Gastrocnemius medialis (tissue), 4 donors: ENCODE measurements at regions of chr22 and their contacts with region 1.

Region 1: DNA sequence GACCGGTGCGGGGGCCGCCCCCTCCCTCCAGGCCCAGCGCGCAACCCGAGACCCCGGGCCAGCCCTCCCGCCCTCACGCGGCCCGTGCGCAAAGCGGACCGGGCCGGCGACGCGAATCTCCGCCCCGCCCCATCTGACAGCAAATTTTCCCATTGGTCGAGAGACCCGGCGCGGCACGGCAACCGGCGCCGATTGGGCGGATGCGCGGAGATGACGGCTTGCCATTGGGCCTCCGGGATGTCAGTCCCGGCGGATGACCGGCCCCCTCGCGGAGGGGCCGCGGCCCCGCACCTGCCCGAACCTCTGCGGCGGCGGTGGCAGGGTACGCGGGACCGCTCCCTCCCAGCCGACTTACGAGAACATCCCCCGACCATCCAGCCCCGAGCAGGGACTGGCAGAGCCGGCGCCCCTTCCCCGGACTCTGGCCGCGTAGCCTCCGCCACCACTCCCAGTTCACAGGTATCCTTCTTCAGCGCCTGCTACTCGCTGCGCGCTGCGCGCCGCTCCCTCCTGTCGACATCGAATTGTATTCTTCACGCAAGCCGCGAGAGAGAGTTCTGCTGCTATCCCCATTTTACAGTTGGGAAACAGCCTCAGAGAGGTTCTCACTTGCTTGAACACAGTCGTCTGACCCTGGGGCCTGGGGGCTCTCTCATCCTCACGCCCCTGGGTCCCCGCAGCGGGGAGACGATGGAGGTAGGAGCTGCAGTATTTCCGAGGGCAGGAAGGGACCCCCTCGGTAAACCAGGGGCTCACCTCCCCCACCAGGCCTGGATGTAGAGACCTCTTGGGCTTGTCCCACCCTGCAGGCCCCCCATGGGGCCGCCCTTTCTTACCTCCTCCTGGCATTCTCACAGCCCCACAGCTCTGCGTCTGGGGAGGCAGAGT is at the start of gene ARVCF:
- DNase-seq: peak; percentile 92
- ATAC-seq: peak; percentile 70 to 76
- H3K4me3 ChIP-seq: peak within 1 kb of the TSS; percentile 69 to 88 (median 86)
- H3K27ac ChIP-seq: peak within 1 kb of the TSS; percentile 75 to 81 (median 78)
- H3K4me1 ChIP-seq: peaks cover 23 to 28% of the 10 kb centered on the region in 2 donors
- H3K27me3 ChIP-seq: no peaks in the 10 kb centered on the region
- CTCF ChIP-seq: peak in 3 of 5 experiments; percentile 44 to 57 (median 56)
- POLR2A ChIP-seq: peak; percentile 44 to 70
- total RNA-seq, gene ARVCF: 6.9 to 19.6 (median 18.0) TPM

Region 2: DNA sequence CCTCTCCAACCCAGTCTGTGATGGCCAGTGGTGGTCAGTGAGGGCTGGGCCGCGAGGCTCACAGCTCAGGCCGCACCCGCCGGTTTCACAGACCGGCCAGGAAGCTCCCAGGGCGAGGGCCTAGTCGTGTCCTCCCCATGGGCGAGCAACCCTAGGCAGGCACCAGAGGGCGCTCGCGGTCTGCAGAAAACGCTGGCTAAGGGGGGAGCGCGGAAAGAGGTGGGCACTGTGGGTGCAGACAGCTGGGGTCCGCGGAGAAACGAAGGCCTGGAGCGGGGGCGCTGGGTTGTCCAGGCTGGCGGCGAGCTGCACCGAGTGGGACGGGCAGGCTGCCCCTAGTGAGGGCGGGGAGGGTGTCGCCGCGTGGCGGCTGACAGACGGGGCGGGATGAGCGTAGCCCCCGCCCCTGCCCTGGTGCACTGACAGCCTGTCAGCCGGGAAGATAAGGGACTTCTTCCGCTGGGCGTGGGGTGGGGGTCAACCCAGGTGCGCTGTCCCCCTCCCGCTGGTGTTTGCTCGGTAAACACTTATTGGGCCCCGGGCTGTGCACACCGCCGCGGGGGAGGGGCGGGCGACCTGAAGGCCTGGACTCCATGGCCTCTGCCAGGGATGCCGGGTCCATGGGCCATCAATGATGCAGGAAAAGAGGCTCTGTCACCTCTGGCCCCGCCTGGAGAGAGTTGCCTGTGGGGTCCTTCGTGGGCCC is 286.2 kb before region 1 on chr22:
- in situ Hi-C with region 1: no loop called
- intact Hi-C with region 1: loop called (anchors 2 kb)
- DNase-seq: peak; percentile 65 to 73
- ATAC-seq: peak; percentile 86 to 92
- H3K4me3 ChIP-seq: peak overlapping the region; percentile 44 to 53 (median 48)
- H3K27ac ChIP-seq: no peak overlapping the region
- H3K4me1 ChIP-seq: no peaks in the 10 kb centered on the region
- H3K27me3 ChIP-seq: no peaks in the 10 kb centered on the region
- CTCF ChIP-seq: peak; percentile 95 to 99 (median 98)
- POLR2A ChIP-seq: no peak

Region 3: GRCh38 chr22:19970479-19971275 is 46.3 kb before region 1 on chr22:
- in situ Hi-C with region 1: loop called in 3 of 4 experiments (anchors 5 kb)
- intact Hi-C with region 1: loop called (anchors 1 kb)
- DNase-seq: peak; percentile 35 to 55
- ATAC-seq: peak; percentile 73 to 75
- H3K4me3 ChIP-seq: no peak overlapping the region
- H3K27ac ChIP-seq: peak overlapping the region in 3 of 4 donors; percentile 8 to 64 (median 64)
- H3K4me1 ChIP-seq: peaks cover 0 to 8% of the 10 kb centered on the region in 2 donors
- H3K27me3 ChIP-seq: no peaks in the 10 kb centered on the region
- CTCF ChIP-seq: peak; percentile 85 to 99 (median 94)
- POLR2A ChIP-seq: no peak

Region 4: DNA sequence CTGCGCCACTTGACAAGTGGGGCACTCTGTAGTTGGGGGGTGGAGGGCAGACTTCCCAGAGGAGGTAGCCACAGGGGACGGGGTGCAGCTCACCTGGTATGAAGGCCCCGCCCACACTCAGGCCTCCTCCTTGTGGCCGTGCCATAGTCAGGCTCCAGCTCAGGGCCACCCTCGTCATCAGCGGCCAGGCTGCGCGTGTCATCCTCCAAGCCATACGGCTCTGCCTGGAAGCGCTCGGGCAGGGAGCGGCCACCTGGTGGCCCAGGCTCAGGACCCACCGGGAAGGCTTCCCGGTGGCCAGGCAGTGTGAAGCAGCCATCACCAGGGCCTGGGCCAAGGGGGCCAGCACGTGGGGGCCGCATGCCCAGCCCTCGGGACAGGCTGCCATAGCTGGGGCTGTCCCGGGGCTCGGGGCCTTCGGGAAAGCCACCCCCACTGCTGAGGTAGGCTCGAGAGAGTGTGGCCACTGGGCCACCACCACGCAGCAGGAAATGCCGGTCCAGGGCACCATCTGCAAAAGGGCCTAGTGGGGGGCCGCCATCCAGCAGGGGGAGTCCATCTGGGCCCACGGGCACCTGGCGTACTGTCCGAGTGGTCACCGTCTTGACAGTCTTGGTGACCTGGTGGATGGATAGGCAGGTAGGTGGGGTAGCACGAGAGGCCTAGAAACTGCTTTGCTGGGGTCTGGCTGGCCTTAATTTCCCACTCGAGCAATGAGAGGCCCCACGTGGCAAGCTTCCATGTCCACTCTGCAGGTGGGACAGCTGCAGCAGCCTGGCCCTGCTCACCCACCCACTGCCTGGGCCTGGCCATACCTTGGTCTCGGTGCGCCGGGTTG is 35.6 kb before region 1 on chr22:
- in situ Hi-C with region 1: no loop called
- intact Hi-C with region 1: no loop called
- DNase-seq: no peak
- ATAC-seq: no peak
- H3K4me3 ChIP-seq: no peak overlapping the region
- H3K27ac ChIP-seq: peak overlapping the region in 3 of 4 donors; percentile 92 to 100 (median 96)
- H3K4me1 ChIP-seq: peaks cover 44% of the 10 kb centered on the region in 2 donors
- H3K27me3 ChIP-seq: no peaks in the 10 kb centered on the region
- CTCF ChIP-seq: no peak
- POLR2A ChIP-seq: no peak

Region 5: GRCh38 chr22:19995626-19996335 is 21.2 kb before region 1 on chr22:
- in situ Hi-C with region 1: no loop called
- intact Hi-C with region 1: no loop called
- DNase-seq: no peak
- ATAC-seq: peak in 1 of 2 donors; percentile 22
- H3K4me3 ChIP-seq: no peak overlapping the region
- H3K27ac ChIP-seq: no peak overlapping the region
- H3K4me1 ChIP-seq: peaks cover 10 to 30% of the 10 kb centered on the region in 2 donors
- H3K27me3 ChIP-seq: no peaks in the 10 kb centered on the region
- CTCF ChIP-seq: no peak
- POLR2A ChIP-seq: no peak

Region 6: DNA sequence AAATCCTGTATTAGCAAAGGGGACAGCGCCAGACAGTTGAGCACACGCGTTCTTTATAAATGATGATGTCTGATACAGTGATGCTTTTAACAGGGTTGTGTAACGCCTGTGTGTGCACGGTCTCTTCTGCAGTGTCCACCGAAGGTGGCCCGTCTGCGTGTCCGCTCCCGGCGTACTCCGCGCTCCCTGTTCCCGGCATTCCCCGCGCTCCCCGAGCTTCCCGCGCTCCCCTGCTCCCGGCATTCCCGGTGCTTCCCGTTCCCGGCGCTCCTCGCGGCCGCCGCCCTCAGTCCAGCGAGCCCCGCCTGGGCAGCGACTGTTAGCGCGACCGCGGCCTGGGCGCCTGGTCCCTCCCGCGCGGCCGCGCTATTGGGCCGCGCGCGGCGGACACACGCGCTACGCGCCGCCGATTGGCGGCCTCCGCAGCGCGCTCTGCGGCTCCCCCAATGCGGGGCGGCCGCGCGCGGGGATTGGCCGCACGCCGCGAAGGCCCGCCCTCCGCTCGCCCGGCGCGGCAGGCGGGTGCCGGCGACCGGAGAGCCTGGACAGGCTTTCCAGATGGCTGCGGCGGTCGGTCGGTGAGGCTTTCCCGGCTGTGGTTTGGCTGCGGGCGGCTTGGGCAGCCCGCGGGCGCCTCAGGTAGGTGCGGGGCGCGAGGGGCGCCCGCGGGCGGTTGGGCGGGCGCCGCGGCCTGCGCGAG is 62.9 kb after region 1 on chr22 and contains the start of gene DGCR8:
- in situ Hi-C with region 1: no loop called
- intact Hi-C with region 1: loop called (anchors 2 kb)
- DNase-seq: peak; percentile 90 to 94
- ATAC-seq: peak; percentile 84 to 86
- H3K4me3 ChIP-seq: peak within 1 kb of the TSS; percentile 61 to 87 (median 75)
- H3K27ac ChIP-seq: peak within 1 kb of the TSS; percentile 83 to 96 (median 86)
- H3K4me1 ChIP-seq: peaks cover 43 to 50% of the 10 kb centered on the region in 2 donors
- H3K27me3 ChIP-seq: no peaks in the 10 kb centered on the region
- CTCF ChIP-seq: peak in 1 of 5 experiments; percentile 6
- POLR2A ChIP-seq: peak; percentile 62 to 65
- total RNA-seq, gene DGCR8: 5.2 to 16.5 (median 11.2) TPM

Region 7: GRCh38 chr22:20130739-20131596 is 114.0 kb after region 1 on chr22:
- in situ Hi-C with region 1: no loop called
- intact Hi-C with region 1: loop called (anchors 5 kb)
- DNase-seq: peak; percentile 81 to 87
- ATAC-seq: peak; percentile 81 to 83
- H3K4me3 ChIP-seq: peak overlapping the region; percentile 78 to 100 (median 95)
- H3K27ac ChIP-seq: peak overlapping the region; percentile 94 to 99 (median 98)
- H3K4me1 ChIP-seq: peaks cover 25 to 50% of the 10 kb centered on the region in 2 donors
- H3K27me3 ChIP-seq: no peaks in the 10 kb centered on the region
- CTCF ChIP-seq: no peak
- POLR2A ChIP-seq: peak in 1 of 2 donors; percentile 22